Natural killer cell (primary cell): ENCODE measurements at regions of chrX and their contacts with region 1.

Region 1: DNA sequence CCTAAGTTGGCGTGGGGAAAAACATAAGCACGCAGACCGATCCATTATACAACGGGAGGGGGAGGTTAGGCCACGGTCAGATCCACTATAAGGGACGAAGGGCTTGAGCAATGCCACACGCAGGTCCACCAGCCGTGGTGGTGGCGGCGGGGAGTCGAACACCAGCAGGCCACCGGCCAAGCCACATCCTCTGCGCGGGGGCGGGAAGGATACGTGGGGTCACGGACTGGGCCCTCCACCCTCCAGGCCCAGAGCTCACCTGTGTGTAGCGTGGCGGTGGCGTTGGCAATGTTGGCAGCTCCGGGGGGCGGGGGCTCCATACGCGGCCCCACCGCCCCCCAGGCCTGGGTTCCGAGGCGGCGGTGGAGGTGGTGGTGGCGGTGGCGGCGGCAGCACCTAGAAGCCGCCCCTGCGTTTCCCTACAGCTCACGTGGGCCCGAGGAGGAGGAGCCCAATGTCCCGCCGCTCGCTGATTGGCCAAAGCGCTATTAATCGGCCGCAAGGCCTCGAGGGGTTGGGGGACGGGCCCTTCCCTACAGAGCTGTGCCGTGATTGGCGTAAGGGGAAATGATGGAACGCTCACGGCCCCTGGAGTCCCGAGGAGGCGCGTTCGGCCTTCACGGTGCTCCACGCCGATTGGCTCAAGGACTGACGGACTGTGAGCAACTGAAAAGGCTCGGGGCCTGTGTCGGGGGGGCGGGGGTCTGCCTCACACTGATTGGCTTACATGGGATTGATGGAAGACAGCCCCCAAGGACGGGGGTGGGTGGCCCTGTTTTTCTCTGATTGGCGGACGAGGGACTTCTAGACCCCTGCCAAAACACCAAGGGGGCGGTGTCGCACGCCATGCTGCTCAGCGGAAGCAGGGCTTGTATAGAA is at the start of gene ELK1:
- DNase-seq: peak; percentile 81 to 94
- ATAC-seq: peak; percentile 88 to 97 (median 91)
- H3K4me3 ChIP-seq: peak within 1 kb of the TSS; percentile 56
- H3K4me3 Mint-ChIP-seq: peak within 1 kb of the TSS; percentile 88
- H3K27ac ChIP-seq: peak within 1 kb of the TSS; percentile 64
- H3K27ac Mint-ChIP-seq: peak within 1 kb of the TSS; percentile 83 to 85
- H3K4me1 ChIP-seq: peaks cover 22% of the 10 kb centered on the region
- H3K4me1 Mint-ChIP-seq: peaks cover 15 to 23% of the 10 kb centered on the region in 2 donors
- H3K27me3 ChIP-seq: no peaks in the 10 kb centered on the region
- H3K27me3 Mint-ChIP-seq: no peaks in the 10 kb centered on the region
- CTCF ChIP-seq: no peak
- total RNA-seq, gene ELK1: 14.1 to 15.2 (median 14.8) TPM

Region 2: DNA sequence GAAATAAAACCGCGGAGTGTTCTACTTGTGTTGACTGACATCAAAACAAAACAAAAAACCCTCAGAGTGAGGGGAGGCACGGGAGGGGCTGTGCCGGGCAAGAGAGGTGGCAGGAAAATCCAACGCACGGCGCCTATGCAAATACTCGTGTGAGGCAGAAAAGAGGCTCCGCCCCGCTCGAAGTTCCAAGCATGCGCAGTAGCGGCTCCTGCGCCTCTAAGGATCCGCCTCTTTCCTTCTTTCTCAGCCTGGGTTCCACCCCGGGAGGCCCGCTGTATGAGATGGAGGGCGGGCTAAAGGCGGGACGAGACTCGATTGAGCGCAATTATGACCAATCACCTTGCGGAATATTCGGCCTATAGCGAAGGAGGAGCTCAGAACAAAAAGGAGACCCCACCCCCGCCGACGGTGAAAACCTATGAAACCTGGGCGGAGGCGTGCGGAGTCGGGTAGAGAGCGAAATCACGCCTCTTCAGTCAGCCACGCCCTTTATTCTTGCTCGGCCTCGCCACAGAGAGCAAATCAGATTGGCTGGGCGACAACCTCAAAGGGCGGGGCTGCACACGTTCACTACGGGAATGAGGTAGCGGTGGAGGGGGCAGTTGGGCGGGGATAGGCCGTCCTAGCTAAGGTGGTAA is 432.6 kb before region 1 on chrX:
- intact Hi-C with region 1: loop called (anchors 10 kb)
- DNase-seq: peak; percentile 85 to 96
- ATAC-seq: peak; percentile 77 to 91 (median 77)
- H3K4me3 ChIP-seq: peak overlapping the region; percentile 76
- H3K4me3 Mint-ChIP-seq: peak overlapping the region; percentile 94
- H3K27ac ChIP-seq: peak overlapping the region; percentile 100
- H3K27ac Mint-ChIP-seq: peak overlapping the region; percentile 95 to 98
- H3K4me1 ChIP-seq: peaks cover 25% of the 10 kb centered on the region
- H3K4me1 Mint-ChIP-seq: peaks cover 36 to 50% of the 10 kb centered on the region in 2 donors
- H3K27me3 ChIP-seq: no peaks in the 10 kb centered on the region
- H3K27me3 Mint-ChIP-seq: no peaks in the 10 kb centered on the region
- CTCF ChIP-seq: no peak

Region 3: DNA sequence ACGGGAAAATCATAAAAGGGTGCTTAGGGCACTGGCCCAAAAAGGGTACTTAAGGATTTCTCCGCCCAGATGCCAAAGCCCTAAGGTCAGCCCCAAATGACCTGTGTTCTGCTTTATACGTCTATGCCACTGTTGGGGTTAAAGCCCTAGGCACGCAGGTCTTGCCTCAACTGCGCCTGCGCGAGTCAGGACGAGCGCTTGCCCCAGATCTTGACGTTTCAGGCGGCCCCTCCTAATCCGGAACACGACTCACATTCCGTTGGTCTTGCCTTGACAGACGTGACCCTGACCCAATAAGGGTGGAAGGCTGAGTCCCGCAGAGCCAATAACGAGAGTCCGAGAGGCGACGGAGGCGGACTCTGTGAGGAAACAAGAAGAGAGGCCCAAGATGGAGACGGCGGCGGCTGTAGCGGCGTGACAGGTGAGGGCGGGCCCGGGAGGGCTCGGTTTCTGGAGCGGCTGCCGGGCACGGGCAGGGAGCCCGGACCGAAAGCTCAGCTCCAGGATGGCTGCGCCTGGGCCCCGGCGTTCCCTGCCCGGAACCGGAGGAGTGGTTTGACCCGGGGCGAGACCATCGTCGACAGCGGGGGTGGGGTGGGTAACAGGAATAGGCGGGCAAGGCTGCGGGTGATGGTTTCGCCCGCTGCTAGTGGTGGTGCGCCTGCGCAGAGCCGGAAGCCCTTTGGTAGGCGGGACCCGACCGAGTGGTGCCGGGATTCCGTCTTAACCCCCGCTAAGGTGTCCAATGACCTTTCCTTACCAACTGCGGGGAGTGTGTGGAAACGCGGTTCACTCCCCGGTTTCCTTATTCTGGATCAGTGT is 89.4 kb before region 1 on chrX and contains the start of gene ARAF:
- intact Hi-C with region 1: no loop called
- DNase-seq: peak; percentile 89 to 98
- ATAC-seq: peak; percentile 85 to 95 (median 88)
- H3K4me3 ChIP-seq: peak within 1 kb of the TSS; percentile 64
- H3K4me3 Mint-ChIP-seq: peak within 1 kb of the TSS; percentile 96
- H3K27ac ChIP-seq: peak within 1 kb of the TSS; percentile 97
- H3K27ac Mint-ChIP-seq: peak within 1 kb of the TSS; percentile 95 to 97
- H3K4me1 ChIP-seq: peaks cover 35% of the 10 kb centered on the region
- H3K4me1 Mint-ChIP-seq: peaks cover 17 to 41% of the 10 kb centered on the region in 2 donors
- H3K27me3 ChIP-seq: no peaks in the 10 kb centered on the region
- H3K27me3 Mint-ChIP-seq: no peaks in the 10 kb centered on the region
- CTCF ChIP-seq: no peak
- total RNA-seq, gene ARAF: 162 to 173 (median 169) TPM

Region 4: DNA sequence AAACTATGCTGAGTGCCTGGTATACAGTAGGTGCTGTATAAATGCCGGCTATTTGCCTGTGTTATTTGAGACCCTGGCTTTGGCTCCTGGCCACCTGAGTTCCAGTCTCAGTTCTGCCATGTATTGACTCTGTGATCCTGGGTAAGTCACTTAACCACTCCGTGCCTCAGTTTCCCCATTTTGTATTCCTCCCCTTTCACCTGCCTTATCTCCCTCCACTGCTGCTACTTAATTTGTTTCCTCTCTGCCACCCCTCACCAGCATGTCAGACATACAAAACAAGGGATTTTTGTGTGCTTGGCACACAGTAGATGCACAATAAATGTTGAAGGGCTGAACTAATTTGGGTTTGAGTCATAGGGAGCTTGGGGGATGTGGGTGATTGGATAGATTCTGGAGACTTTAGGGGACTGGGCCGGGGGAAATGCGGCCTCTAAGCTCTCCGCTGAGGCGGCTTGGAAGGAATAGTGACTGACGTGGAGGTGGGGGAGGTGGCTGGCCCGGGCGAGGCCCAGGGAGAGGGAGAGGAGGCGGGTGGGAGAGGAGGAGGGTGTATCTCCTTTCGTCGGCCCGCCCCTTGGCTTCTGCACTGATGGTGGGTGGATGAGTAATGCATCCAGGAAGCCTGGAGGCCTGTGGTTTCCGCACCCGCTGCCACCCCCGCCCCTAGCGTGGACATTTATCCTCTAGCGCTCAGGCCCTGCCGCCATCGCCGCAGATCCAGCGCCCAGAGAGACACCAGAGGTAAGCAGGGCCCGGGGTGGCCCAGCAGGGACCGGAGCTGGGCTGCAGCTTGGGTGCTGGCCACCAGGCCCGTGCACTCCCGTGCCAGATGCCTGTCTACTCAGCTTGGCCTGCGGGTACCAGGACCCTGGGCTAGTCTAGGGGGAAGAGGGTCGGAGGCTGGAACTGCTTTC is 68.4 kb before region 1 on chrX and contains the start of gene TIMP1:
- intact Hi-C with region 1: no loop called
- DNase-seq: peak; percentile 70 to 82
- ATAC-seq: peak; percentile 92 to 96 (median 93)
- H3K4me3 ChIP-seq: peak within 1 kb of the TSS; percentile 52
- H3K4me3 Mint-ChIP-seq: peak within 1 kb of the TSS; percentile 70
- H3K27ac ChIP-seq: peak within 1 kb of the TSS; percentile 59
- H3K27ac Mint-ChIP-seq: peak within 1 kb of the TSS in 1 of 2 donors; percentile 88
- H3K4me1 ChIP-seq: peaks cover 29% of the 10 kb centered on the region
- H3K4me1 Mint-ChIP-seq: peaks cover 20 to 39% of the 10 kb centered on the region in 2 donors
- H3K27me3 ChIP-seq: no peaks in the 10 kb centered on the region
- H3K27me3 Mint-ChIP-seq: peaks cover 0 to 5% of the 10 kb centered on the region in 2 donors
- CTCF ChIP-seq: no peak
- total RNA-seq, gene TIMP1: 50.9 to 71.3 (median 68.6) TPM

Region 5: GRCh38 chrX:47633689-47634590 is 16.5 kb before region 1 on chrX:
- intact Hi-C with region 1: loop called (anchors 2 kb)
- DNase-seq: no peak
- ATAC-seq: peak; percentile 17 to 21 (median 18)
- H3K4me3 ChIP-seq: no peak overlapping the region
- H3K4me3 Mint-ChIP-seq: no peak overlapping the region
- H3K27ac ChIP-seq: no peak overlapping the region
- H3K27ac Mint-ChIP-seq: no peak overlapping the region
- H3K4me1 ChIP-seq: peaks cover 35% of the 10 kb centered on the region
- H3K4me1 Mint-ChIP-seq: peaks cover 0 to 17% of the 10 kb centered on the region in 2 donors
- H3K27me3 ChIP-seq: peaks cover 10% of the 10 kb centered on the region
- H3K27me3 Mint-ChIP-seq: peaks cover 9 to 25% of the 10 kb centered on the region in 2 donors
- CTCF ChIP-seq: no peak

Region 6: DNA sequence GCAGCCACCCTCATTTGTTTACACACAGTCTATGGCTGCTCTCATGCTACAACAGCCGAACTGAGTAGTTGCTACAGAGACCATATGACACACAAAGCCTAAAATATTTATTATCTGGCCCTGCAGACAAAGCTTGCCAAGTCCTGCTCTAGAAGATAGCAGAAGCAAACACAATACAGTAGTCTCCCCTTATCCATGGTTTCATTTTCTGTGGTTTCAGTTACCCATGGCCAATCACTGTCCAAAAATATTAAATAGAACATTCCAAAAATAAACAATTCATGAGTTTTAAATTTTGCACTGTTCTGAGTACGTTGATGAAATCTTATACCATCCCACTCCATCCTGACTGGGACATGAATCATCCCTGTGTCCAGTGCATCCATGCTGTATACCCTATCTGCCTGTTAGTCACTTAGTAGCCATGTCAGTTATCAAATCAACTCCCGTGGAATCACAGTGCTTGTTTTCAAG is 146.1 kb after region 1 on chrX:
- intact Hi-C with region 1: no loop called
- DNase-seq: no peak
- ATAC-seq: no peak
- H3K4me3 ChIP-seq: no peak overlapping the region
- H3K4me3 Mint-ChIP-seq: no peak overlapping the region
- H3K27ac ChIP-seq: no peak overlapping the region
- H3K27ac Mint-ChIP-seq: no peak overlapping the region
- H3K4me1 ChIP-seq: no peaks in the 10 kb centered on the region
- H3K4me1 Mint-ChIP-seq: no peaks in the 10 kb centered on the region
- H3K27me3 ChIP-seq: no peaks in the 10 kb centered on the region
- H3K27me3 Mint-ChIP-seq: peaks cover 0 to 31% of the 10 kb centered on the region in 2 donors
- CTCF ChIP-seq: no peak